ENCODE measurements at regions of chr6 and their contacts with region 1.

Region 1: GRCh38 chr6:143427109-143427817 is 23.2 kb downstream of the ADAT2 start:
- DNase-seq: peak; percentile 84

Region 2: DNA sequence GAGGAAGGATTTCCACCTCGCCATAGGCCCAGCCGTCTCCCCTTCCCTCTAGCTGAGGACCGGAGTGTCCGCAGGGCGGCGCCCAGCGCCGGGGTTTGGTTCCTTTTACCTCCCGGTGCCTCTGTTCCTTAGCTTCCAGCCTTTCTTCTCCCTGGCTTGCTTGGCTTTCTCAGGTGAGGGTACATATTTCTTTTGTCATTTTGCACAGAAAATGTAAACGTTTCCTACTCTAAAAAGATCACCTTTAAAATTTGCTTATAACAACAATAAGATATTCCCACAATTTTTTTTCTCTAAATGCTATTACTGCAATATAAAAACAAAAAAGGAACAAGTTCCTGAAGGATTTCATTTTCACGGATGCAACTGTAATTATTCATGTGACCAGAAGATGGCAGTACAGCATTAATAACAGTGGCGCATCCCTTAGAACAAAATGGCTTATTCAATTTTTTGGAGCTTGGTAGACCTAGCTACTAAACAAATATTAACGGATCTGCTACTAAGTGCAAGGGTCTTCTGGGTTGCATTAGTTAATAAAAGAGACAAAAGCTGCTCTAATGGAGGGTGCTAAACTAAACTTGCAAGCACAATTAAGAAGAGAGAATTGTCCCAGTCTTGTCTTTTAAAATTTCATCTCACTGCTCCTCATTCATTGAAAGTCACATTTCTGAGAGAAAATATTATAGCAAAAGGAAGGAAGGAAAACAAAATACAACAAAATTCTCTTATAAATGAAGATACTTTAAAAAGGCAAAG is 952.6 kb before region 1 on chr6:
- CTCF ChIA-PET with region 1: interaction called, 16 read pairs
- POLR2A ChIA-PET with region 1: no interaction called
- DNase-seq: peak; percentile 71